Pancreas (tissue), 10 donors: ENCODE measurements at regions of chr6 and their contacts with region 1.

Region 1: DNA sequence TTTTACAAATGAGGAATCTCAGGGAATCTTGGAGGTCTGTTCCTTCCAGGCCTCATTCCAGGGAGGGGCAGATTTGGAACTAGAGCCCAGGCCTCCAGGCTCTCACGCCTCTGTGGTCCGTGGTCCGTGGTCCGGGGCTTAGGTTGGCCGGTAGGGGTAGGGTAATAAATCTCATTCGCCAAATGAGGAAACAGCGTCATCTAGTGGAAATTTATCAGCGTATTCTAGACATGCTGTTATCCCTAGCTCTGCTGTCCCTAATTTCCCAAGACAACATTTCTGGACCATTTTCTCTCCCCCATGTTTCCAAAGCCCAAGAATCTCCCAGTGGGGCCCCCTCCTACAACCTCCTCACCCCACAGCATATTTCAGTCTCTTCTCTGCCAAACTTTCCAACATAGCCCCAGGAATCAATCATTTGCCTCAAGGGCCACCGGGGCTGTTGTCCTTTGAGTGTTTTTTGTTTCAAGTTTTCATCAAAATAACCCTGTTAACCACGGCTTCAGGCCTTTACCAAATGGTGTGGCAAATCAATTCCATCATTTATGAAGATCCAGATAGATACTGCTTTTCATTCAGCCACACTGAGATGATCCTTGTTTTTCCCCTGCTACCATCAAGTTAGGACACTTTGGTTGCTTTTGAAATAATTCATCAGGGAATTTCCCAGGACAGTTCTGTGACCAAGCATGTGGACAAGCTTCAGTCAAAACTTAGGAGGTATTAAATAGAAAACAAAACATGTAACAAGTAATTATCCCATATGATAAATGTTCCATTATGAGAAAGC is 126.8 kb downstream of the ALDH8A1 start:
- DNase-seq: peak in 4 of 6 donors; percentile 29 to 62 (median 36)
- ATAC-seq: peak; percentile 94 to 96 (median 94)
- H3K4me3 ChIP-seq: no peak overlapping the region
- H3K27ac ChIP-seq: no peak overlapping the region
- H3K4me1 ChIP-seq: peaks cover 0 to 6% (median 4%) of the 10 kb centered on the region in 3 donors
- H3K27me3 ChIP-seq: no peaks in the 10 kb centered on the region
- CTCF ChIP-seq: peak; percentile 56 to 82 (median 78)

Region 2: GRCh38 chr6:134123666-134124208 is 699.4 kb before region 1 on chr6:
- intact Hi-C with region 1: loop called in 1 of 3 experiments (anchors 10 kb)
- DNase-seq: no peak
- ATAC-seq: peak; percentile 67 to 82 (median 74)
- H3K4me3 ChIP-seq: no peak overlapping the region
- H3K27ac ChIP-seq: no peak overlapping the region
- H3K4me1 ChIP-seq: peaks cover 0 to 3% (median 0%) of the 10 kb centered on the region in 3 donors
- H3K27me3 ChIP-seq: no peaks in the 10 kb centered on the region
- CTCF ChIP-seq: peak; percentile 24 to 70 (median 64)

Region 3: DNA sequence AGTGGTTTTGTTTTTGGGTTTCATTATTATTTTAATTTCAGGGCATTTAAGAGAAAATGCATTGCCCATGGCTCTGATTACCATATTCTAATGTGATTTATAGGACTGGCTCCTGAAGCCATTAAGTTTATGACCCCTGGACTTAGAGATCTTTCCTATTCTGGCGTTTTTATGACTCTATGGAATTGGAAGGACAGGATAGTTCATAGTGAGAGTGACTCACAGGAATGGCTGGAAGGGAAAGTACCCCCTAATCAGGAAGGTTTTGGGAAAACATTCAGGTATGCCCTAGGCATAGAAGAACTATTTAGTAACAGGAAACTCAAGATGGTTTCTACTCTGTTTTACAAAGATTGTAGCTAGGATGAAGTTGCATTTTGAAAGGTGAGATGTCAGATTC is 662.1 kb before region 1 on chr6:
- intact Hi-C with region 1: loop called in 1 of 3 experiments (anchors 5 kb)
- DNase-seq: no peak
- ATAC-seq: peak in 3 of 4 donors; percentile 47 to 66 (median 48)
- H3K4me3 ChIP-seq: no peak overlapping the region
- H3K27ac ChIP-seq: peak overlapping the region in 1 of 4 donors; percentile 24
- H3K4me1 ChIP-seq: no peaks in the 10 kb centered on the region
- H3K27me3 ChIP-seq: no peaks in the 10 kb centered on the region
- CTCF ChIP-seq: no peak

Region 4: DNA sequence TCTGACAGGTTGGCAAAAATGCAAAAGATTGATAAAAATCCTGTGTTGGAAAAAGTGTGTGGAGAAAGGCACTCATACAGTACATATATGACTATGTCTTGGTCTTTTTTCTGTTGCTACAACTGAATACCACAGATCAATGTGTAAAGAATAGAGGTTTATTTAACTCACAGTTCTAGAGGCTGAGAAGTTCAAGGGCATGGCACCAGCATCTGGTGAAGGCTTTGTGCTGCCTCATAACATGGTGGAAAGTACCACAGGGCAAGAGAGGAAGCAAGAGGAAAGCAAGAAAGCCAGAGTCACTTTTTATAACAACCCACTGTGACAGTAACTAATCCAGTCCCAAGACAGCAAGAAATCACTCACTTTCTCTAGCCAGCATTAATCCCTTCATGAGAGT is 69.2 kb after region 1 on chr6:
- intact Hi-C with region 1: no loop called
- DNase-seq: no peak
- ATAC-seq: no peak
- H3K4me3 ChIP-seq: no peak overlapping the region
- H3K27ac ChIP-seq: no peak overlapping the region
- H3K4me1 ChIP-seq: no peaks in the 10 kb centered on the region
- H3K27me3 ChIP-seq: no peaks in the 10 kb centered on the region
- CTCF ChIP-seq: no peak

Region 5: GRCh38 chr6:134903448-134903847 is 80.3 kb after region 1 on chr6:
- intact Hi-C with region 1: no loop called
- DNase-seq: no peak
- ATAC-seq: peak in 2 of 4 donors; percentile 63 to 65
- H3K4me3 ChIP-seq: no peak overlapping the region
- H3K27ac ChIP-seq: no peak overlapping the region
- H3K4me1 ChIP-seq: no peaks in the 10 kb centered on the region
- H3K27me3 ChIP-seq: no peaks in the 10 kb centered on the region
- CTCF ChIP-seq: no peak

Region 6: DNA sequence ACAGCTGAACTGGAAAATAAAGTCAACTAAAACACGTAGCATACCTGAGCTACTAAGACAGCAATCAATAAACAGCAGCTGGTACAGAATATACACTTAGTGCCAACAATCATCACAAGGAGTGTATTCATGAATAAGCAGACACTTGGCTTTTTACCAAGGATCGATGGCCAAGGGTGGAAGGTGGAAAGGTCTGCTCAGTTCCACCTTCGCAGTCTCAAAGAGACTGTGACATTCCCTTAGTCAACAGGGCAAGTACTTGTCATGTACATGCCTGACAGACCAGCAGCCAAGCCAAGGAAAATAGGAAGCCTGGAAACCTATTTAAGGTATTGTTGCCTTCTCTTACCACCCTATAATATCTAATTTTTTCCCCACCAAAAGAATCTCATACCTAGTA is 210.1 kb after region 1 on chr6:
- intact Hi-C with region 1: no loop called
- DNase-seq: peak in 3 of 6 donors; percentile 40 to 73 (median 60)
- ATAC-seq: peak; percentile 82 to 92 (median 84)
- H3K4me3 ChIP-seq: no peak overlapping the region
- H3K27ac ChIP-seq: no peak overlapping the region
- H3K4me1 ChIP-seq: peaks cover 14 to 22% (median 17%) of the 10 kb centered on the region in 3 donors
- H3K27me3 ChIP-seq: no peaks in the 10 kb centered on the region
- CTCF ChIP-seq: no peak

Region 7: DNA sequence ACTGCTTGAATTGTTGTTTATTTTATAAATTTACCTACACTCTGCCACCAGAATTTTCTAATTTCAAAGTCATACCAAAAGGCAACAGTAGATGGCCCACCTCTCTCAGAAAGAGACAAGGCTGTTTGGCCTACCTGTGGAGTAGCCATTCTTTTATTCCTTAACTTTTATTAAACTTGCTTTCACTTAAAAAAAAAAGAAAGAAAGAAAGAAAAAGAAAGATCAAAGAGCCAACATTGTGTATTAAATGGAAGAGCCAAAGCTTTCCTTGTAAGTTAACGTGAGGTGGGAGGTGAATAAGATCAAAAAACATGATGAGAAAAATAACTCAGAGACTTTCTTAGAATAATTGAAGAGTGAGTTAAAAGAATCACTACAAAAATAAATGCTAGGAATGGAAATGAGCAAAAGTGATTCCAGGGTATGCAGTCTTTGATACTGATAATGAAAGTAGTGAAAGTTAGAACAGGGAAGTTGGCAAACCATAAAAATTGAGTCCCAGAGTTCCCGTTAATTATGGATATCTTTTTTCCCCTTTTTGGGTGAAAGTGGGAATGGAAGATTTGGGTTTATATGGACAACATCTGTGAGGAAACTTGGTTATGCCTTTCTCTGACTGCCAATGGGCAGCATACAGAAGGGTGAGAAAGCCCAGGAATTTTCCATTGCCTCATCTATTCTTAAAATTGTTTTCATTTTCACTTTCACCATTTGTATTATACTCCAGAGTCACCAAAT is 322.1 kb after region 1 on chr6:
- intact Hi-C with region 1: no loop called
- DNase-seq: no peak
- ATAC-seq: peak; percentile 60 to 88 (median 82)
- H3K4me3 ChIP-seq: no peak overlapping the region
- H3K27ac ChIP-seq: no peak overlapping the region
- H3K4me1 ChIP-seq: peaks cover 0 to 2% (median 0%) of the 10 kb centered on the region in 3 donors
- H3K27me3 ChIP-seq: no peaks in the 10 kb centered on the region
- CTCF ChIP-seq: peak in 3 of 4 donors; percentile 22 to 42 (median 29)